ENCODE measurements at regions of chr20 and their contacts with region 1.

Region 1: GRCh38 chr20:23441850-23442313 is 2.4 kb downstream of the CSTL1 start:
- DNase-seq: peak; percentile 35
- H3K4me3 Mint-ChIP-seq: no peak overlapping the region
- H3K27ac Mint-ChIP-seq: no peak overlapping the region
- H3K4me1 Mint-ChIP-seq: no peaks in the 10 kb centered on the region
- H3K27me3 Mint-ChIP-seq: peaks cover 3% of the 10 kb centered on the region

Region 2: DNA sequence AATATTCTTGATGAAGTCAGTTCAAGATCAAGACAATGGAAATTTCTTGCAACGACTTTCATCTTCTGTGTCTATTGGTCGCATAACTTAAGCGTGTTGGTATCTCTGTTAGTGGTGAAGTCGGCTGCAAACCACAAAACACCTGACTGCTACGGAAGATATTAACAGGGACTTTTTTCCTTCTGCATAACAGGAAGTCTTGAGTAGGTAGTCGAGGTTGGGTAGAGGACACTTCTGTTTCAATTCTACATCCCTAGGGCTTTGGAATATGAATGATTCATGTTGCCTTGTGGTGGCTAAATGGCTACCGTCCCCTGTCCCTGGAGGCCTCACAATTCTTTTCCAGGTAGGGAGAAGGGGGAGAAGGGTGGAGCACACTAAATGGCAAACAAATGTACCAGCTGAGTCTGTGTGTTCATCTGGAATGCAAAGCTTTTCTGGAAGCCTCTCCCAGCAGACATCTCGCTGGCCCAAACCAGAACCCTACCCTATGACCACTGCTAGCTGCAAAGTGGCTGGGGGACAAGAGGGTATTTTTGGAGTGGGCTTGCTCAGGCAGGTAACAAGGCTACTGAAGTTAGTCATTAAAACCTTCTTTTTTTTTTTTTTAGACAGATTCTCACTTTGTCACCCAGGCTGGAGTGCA is 1893.4 kb before region 1 on chr20:
- intact Hi-C with region 1: no loop called
- DNase-seq: peak; percentile 61
- H3K4me3 Mint-ChIP-seq: peak overlapping the region; percentile 47
- H3K27ac Mint-ChIP-seq: peak overlapping the region; percentile 81
- H3K4me1 Mint-ChIP-seq: peaks cover 38% of the 10 kb centered on the region
- H3K27me3 Mint-ChIP-seq: peaks cover 4% of the 10 kb centered on the region

Region 3: DNA sequence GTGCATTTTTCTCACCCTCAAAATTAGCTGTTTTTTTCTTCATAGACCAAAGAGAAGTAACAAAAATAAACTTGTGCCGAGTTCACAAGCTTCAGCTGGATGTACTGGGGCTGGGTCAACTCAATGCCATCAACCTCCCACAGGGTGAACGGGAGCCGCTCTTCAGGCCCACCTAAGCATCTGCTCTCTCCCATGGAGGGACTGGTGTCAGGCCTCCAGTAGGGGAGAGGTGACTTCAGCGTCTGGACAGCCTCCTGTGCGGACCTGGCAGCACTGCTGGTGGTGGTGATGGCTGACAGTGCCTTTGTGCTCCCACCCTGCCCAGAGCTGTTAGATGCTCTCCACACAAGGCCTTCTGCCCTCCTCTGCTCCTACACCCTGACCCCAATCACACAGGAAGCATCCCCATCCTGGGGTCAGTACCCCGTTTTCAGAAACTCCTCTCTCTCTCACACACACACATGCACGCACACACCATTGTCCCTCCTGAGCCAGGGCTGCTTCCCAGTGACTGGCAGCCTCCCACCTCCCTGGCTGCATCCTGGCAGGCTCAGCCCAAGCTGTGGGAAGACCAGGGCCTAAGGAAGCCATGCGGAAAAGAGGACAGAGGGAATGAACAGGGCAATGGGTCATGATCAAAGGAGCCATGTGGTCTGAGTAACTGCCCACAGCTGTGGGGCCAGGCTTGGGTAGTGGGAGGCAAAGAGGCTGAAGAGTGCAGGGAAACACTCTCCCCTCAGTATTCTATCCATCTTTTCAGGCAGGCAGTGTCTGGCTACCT is 66.8 kb after region 1 on chr20:
- intact Hi-C with region 1: no loop called
- DNase-seq: no peak
- H3K4me3 Mint-ChIP-seq: no peak overlapping the region
- H3K27ac Mint-ChIP-seq: no peak overlapping the region
- H3K4me1 Mint-ChIP-seq: no peaks in the 10 kb centered on the region
- H3K27me3 Mint-ChIP-seq: no peaks in the 10 kb centered on the region

Region 4: GRCh38 chr20:23606652-23607049 is 164.8 kb after region 1 on chr20:
- intact Hi-C with region 1: loop called (anchors 1 kb)
- DNase-seq: peak; percentile 44
- H3K4me3 Mint-ChIP-seq: no peak overlapping the region
- H3K27ac Mint-ChIP-seq: no peak overlapping the region
- H3K4me1 Mint-ChIP-seq: no peaks in the 10 kb centered on the region
- H3K27me3 Mint-ChIP-seq: peaks cover 2% of the 10 kb centered on the region

Region 5: DNA sequence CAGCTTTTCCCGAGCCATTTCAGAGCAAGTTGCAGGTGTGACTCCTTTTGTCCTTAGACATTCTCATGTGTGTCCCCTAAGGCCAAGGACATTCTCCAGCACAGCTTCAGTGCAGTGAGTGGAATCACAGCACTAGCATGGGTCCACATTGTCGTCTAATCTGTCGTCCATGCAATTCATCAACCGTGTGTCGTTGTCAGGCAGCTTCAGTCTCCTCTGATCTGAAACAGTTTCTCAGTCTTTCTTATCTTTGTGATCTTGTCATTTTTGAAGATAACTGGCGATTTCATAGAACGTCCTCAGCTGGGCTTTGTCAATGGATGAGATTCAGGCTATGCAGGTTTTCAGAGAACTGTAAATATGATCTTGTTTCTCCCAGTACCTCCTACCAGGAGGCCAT is 353.0 kb after region 1 on chr20:
- intact Hi-C with region 1: no loop called
- DNase-seq: no peak
- H3K4me3 Mint-ChIP-seq: no peak overlapping the region
- H3K27ac Mint-ChIP-seq: no peak overlapping the region
- H3K4me1 Mint-ChIP-seq: no peaks in the 10 kb centered on the region
- H3K27me3 Mint-ChIP-seq: peaks cover 8% of the 10 kb centered on the region

Measured in activated T-helper 1 cell treated with anti-CD3 and anti-CD28 coated beads, Interleukin-12 subunit alpha, Interleukin-12 subunit beta, Interleukin-2, Interleukin-4 antibody, amounts not matched to agents 30 ng/mL and 10 ng/mL and 1 ng/mL, durations not matched to agents 14 hours and 24 hours and 36 hours (primary cell).